ENCODE measurements at regions of chr16 and their contacts with region 1.

Region 1: GRCh38 chr16:86519649-86520316 is 9.5 kb downstream of the FOXF1 start:
- H3K4me3 Mint-ChIP-seq: peak overlapping the region; percentile 21
- H3K27ac Mint-ChIP-seq: no peak overlapping the region
- H3K4me1 Mint-ChIP-seq: peaks cover 7% of the 10 kb centered on the region
- H3K27me3 Mint-ChIP-seq: peaks cover 74% of the 10 kb centered on the region

Region 2: GRCh38 chr16:86072328-86073102 is 447.3 kb before region 1 on chr16:
- intact Hi-C with region 1: loop called (anchors 2 kb)
- H3K4me3 Mint-ChIP-seq: no peak overlapping the region
- H3K27ac Mint-ChIP-seq: no peak overlapping the region
- H3K4me1 Mint-ChIP-seq: no peaks in the 10 kb centered on the region
- H3K27me3 Mint-ChIP-seq: peaks cover 31% of the 10 kb centered on the region

Region 3: DNA sequence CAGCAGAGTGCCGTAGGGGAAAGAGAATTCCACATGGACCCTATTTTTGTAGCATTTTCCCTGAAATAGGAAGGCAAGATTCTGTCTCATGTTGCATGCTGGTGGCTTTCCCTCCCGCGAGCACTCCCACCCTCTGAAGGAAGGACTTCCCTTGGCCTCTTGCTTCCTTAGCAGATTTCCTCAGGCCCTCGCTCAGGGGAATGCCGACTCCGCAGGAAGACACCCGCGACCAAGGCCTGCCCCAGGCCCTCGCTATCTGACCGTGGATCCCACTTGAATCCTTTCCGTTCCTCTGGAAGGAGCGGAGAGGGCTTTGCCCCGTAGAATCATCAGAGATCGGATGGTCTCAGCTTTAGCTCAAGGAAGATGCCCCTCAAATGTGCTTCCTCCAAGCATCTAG is 188.9 kb before region 1 on chr16:
- intact Hi-C with region 1: no loop called
- H3K4me3 Mint-ChIP-seq: no peak overlapping the region
- H3K27ac Mint-ChIP-seq: no peak overlapping the region
- H3K4me1 Mint-ChIP-seq: no peaks in the 10 kb centered on the region
- H3K27me3 Mint-ChIP-seq: peaks cover 46% of the 10 kb centered on the region

Region 4: GRCh38 chr16:86343027-86343787 is 176.6 kb before region 1 on chr16:
- intact Hi-C with region 1: loop called (anchors 5 kb)
- H3K4me3 Mint-ChIP-seq: no peak overlapping the region
- H3K27ac Mint-ChIP-seq: no peak overlapping the region
- H3K4me1 Mint-ChIP-seq: no peaks in the 10 kb centered on the region
- H3K27me3 Mint-ChIP-seq: peaks cover 67% of the 10 kb centered on the region

Measured in dendritic cell treated with granulocyte-macrophage colony-stimulating factor and Interleukin-4, amounts not matched to agents 40 ng/mL and 50 ng/mL, for 4 days (primary cell).